Body of pancreas (tissue), 4 donors: ENCODE measurements at regions of chr21 and their contacts with region 1.

Region 1: GRCh38 chr21:33199516-33200217 is 30.1 kb upstream of the IFNAR2 start:
- DNase-seq: peak; percentile 86 to 94 (median 88)
- ATAC-seq: peak; percentile 84
- H3K4me3 ChIP-seq: no peak overlapping the region
- H3K27ac ChIP-seq: peak overlapping the region in 1 of 4 donors; percentile 68
- H3K4me1 ChIP-seq: peaks cover 37% of the 10 kb centered on the region
- H3K27me3 ChIP-seq: no peaks in the 10 kb centered on the region
- CTCF ChIP-seq: peak; percentile 50 to 97 (median 90)
- POLR2A ChIP-seq: no peak

Region 2: GRCh38 chr21:32958288-32959002 is 241.2 kb before region 1 on chr21:
- intact Hi-C with region 1: no loop called
- DNase-seq: no peak
- ATAC-seq: no peak
- H3K4me3 ChIP-seq: no peak overlapping the region
- H3K27ac ChIP-seq: no peak overlapping the region
- H3K4me1 ChIP-seq: no peaks in the 10 kb centered on the region
- H3K27me3 ChIP-seq: peaks cover 0 to 12% of the 10 kb centered on the region in 2 donors
- CTCF ChIP-seq: no peak
- POLR2A ChIP-seq: no peak

Region 3: GRCh38 chr21:33360881-33361602 is 161.4 kb after region 1 on chr21:
- intact Hi-C with region 1: loop called (anchors 10 kb)
- DNase-seq: peak; percentile 76 to 84 (median 80)
- ATAC-seq: peak; percentile 89
- H3K4me3 ChIP-seq: no peak overlapping the region
- H3K27ac ChIP-seq: peak overlapping the region in 2 of 4 donors; percentile 21 to 69
- H3K4me1 ChIP-seq: peaks cover 19% of the 10 kb centered on the region
- H3K27me3 ChIP-seq: no peaks in the 10 kb centered on the region
- CTCF ChIP-seq: peak; percentile 46 to 87 (median 78)
- POLR2A ChIP-seq: no peak

Region 4: GRCh38 chr21:33441489-33442477 is 242.1 kb after region 1 on chr21:
- intact Hi-C with region 1: loop called (anchors 10 kb)
- DNase-seq: peak in 3 of 4 donors; percentile 13 to 20 (median 19)
- ATAC-seq: no peak
- H3K4me3 ChIP-seq: no peak overlapping the region
- H3K27ac ChIP-seq: no peak overlapping the region
- H3K4me1 ChIP-seq: no peaks in the 10 kb centered on the region
- H3K27me3 ChIP-seq: no peaks in the 10 kb centered on the region
- CTCF ChIP-seq: no peak
- POLR2A ChIP-seq: no peak

Region 5: GRCh38 chr21:33817663-33818451 is 618.2 kb after region 1 on chr21:
- intact Hi-C with region 1: no loop called
- DNase-seq: no peak
- ATAC-seq: no peak
- H3K4me3 ChIP-seq: no peak overlapping the region
- H3K27ac ChIP-seq: no peak overlapping the region
- H3K4me1 ChIP-seq: peaks cover 2% of the 10 kb centered on the region
- H3K27me3 ChIP-seq: no peaks in the 10 kb centered on the region
- CTCF ChIP-seq: no peak
- POLR2A ChIP-seq: no peak